Panc1 (cell line): ENCODE measurements at regions of chr12 and their contacts with region 1.

Region 1: GRCh38 chr12:99746538-99746937 is 99.0 kb downstream of the GARIN6 start:
- DNase-seq: no peak
- ATAC-seq: no peak
- H3K4me3 ChIP-seq: no peak overlapping the region
- H3K27ac ChIP-seq: no peak overlapping the region
- H3K4me1 ChIP-seq: no peaks in the 10 kb centered on the region
- H3K27me3 ChIP-seq: no peaks in the 10 kb centered on the region
- CTCF ChIP-seq: peak; percentile 4; the same call in 1 of the 2 replicates

Region 2: GRCh38 chr12:99068993-99069747 is 677.4 kb before region 1 on chr12:
- CTCF ChIA-PET with region 1: no interaction called
- POLR2A ChIA-PET with region 1: interaction called, 10 read pairs
- in situ Hi-C with region 1: no loop called
- intact Hi-C with region 1: no loop called
- DNase-seq: no peak
- ATAC-seq: no peak
- H3K4me3 ChIP-seq: no peak overlapping the region
- H3K27ac ChIP-seq: no peak overlapping the region
- H3K4me1 ChIP-seq: no peaks in the 10 kb centered on the region
- H3K27me3 ChIP-seq: no peaks in the 10 kb centered on the region
- CTCF ChIP-seq: no peak

Region 3: GRCh38 chr12:99680276-99680675 is 66.3 kb before region 1 on chr12:
- CTCF ChIA-PET with region 1: no interaction called
- POLR2A ChIA-PET with region 1: no interaction called
- in situ Hi-C with region 1: no loop called
- intact Hi-C with region 1: no loop called
- DNase-seq: no peak
- ATAC-seq: no peak
- H3K4me3 ChIP-seq: no peak overlapping the region
- H3K27ac ChIP-seq: no peak overlapping the region
- H3K4me1 ChIP-seq: no peaks in the 10 kb centered on the region
- H3K27me3 ChIP-seq: no peaks in the 10 kb centered on the region
- CTCF ChIP-seq: no peak

Region 4: DNA sequence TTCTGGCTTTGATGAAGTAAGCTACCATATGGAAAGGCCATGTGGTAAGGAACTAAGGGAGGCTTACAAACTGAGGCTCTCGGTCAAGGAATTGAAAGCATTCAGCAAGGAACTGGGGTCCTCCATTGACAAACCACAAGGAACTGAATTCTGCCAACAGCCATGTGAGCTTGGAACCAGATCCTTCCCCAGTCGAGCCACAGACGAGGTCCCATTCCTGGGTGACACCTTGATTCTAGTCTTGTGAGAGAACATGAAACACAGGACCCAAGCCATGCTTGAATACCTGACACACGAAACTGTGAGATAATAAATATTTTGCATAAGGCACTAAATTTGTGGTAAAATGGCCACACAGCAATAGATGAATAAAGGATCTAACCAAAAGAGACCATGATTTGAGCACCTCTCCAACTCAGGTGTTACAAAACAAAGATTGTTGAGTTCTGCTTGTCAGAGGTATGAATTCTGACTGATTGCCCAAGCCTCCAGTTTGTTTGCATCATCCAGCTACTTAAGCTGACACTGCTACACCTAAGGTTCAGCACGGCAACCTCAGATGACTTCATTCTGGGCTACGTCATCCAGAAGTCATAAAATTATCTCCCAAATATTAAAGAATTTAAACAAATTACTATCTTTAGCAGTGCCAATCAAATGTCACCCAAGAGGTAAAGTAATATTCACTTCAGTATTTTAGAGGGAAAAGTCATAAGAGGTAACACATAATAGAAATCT is 39.6 kb before region 1 on chr12:
- CTCF ChIA-PET with region 1: no interaction called
- POLR2A ChIA-PET with region 1: no interaction called
- in situ Hi-C with region 1: no loop called
- intact Hi-C with region 1: no loop called
- DNase-seq: no peak
- ATAC-seq: no peak
- H3K4me3 ChIP-seq: no peak overlapping the region
- H3K27ac ChIP-seq: no peak overlapping the region
- H3K4me1 ChIP-seq: no peaks in the 10 kb centered on the region
- H3K27me3 ChIP-seq: no peaks in the 10 kb centered on the region
- CTCF ChIP-seq: no peak

Region 5: DNA sequence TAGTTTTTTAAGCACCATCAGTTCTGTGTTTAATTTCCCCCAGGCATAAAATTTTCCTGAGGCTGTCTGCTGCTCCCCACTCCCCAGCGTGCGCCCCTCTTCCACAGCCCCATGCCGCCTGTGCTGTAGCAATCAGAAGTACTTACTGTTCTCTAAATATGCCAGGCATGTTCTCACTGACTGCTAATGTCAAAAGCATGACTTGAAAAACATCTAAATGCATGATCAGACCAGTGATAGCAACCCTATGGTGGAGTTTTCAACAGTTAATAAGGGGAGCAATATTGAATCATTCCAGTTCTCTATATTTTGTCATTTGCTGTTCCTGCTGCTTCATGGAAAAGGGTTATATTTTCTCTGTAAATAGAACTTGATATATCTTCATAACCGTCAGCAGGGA is 160.7 kb after region 1 on chr12:
- CTCF ChIA-PET with region 1: no interaction called
- POLR2A ChIA-PET with region 1: no interaction called
- in situ Hi-C with region 1: no loop called
- intact Hi-C with region 1: no loop called
- DNase-seq: no peak
- ATAC-seq: no peak
- H3K4me3 ChIP-seq: no peak overlapping the region
- H3K27ac ChIP-seq: no peak overlapping the region
- H3K4me1 ChIP-seq: peaks cover 8% of the 10 kb centered on the region
- H3K27me3 ChIP-seq: no peaks in the 10 kb centered on the region
- CTCF ChIP-seq: no peak